CD4-positive, alpha-beta memory T cell (primary cell): ENCODE measurements at regions of chr7 and their contacts with region 1.

Region 1: DNA sequence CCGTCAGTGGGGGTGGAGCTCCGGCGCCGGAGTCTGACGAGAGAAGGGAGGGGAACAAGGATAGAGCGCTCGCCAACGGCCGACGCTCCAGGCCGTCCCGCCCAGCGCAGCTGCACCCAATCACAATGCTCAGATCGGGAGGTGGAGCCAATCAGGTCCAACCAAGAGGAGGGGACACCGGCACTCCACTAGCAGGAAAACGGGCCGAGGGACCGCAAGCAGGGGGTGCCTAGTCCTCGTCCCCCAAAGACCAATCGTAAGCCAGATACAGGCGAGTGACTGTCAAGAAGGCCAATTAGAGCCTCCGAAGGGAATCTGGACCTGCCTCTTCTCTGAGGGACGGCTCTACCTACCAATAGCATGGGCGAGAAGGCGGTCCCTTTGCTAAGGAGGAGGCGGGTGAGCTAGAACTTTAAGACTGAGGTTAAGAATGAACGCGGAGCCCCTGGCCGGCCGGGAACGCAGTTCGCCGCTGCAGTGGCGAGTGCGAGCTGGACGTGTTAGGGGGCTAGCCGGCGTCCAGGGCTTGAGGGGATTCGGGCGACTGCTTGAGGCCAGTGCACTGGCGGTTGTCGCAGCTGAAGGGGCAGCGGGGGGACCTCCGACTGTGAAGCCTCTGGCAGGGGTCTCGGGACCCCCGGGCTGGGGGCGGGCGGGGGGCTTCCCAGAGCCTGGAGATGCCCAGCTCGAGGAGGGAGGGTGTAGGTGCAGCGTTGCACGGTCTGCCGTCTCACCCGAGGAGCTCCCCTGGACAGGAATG is at the start of gene FBXO24:
- DNase-seq: peak; percentile 99 to 100 (median 100)
- H3K4me3 ChIP-seq: peak within 1 kb of the TSS; percentile 77 to 98
- H3K4me3 Mint-ChIP-seq: peak within 1 kb of the TSS; percentile 92 to 99 (median 97)
- H3K27ac ChIP-seq: peak within 1 kb of the TSS; percentile 79
- H3K27ac Mint-ChIP-seq: peak within 1 kb of the TSS; percentile 86 to 99 (median 97)
- H3K4me1 ChIP-seq: peaks cover 38% of the 10 kb centered on the region
- H3K4me1 Mint-ChIP-seq: peaks cover 11 to 27% (median 16%) of the 10 kb centered on the region in 4 donors
- H3K27me3 ChIP-seq: no peaks in the 10 kb centered on the region
- H3K27me3 Mint-ChIP-seq: peaks cover 0 to 2% of the 10 kb centered on the region in 2 donors
- total RNA-seq, gene FBXO24: 1.6 to 2.1 TPM

Region 2: GRCh38 chr7:100516135-100516812 is 70.2 kb before region 1 on chr7:
- CTCF ChIA-PET with region 1: interaction called, 4 read pairs
- POLR2A ChIA-PET with region 1: interaction called, 11 read pairs
- intact Hi-C with region 1: no loop called
- DNase-seq: peak; percentile 74 to 82 (median 80)
- H3K4me3 ChIP-seq: peak overlapping the region in 1 of 2 donors; percentile 33
- H3K4me3 Mint-ChIP-seq: peak overlapping the region; percentile 61 to 83 (median 78)
- H3K27ac ChIP-seq: peak overlapping the region; percentile 24
- H3K27ac Mint-ChIP-seq: peak overlapping the region; percentile 72 to 89 (median 82)
- H3K4me1 ChIP-seq: peaks cover 30% of the 10 kb centered on the region
- H3K4me1 Mint-ChIP-seq: peaks cover 21 to 47% (median 28%) of the 10 kb centered on the region in 4 donors
- H3K27me3 ChIP-seq: no peaks in the 10 kb centered on the region
- H3K27me3 Mint-ChIP-seq: no peaks in the 10 kb centered on the region

Region 3: DNA sequence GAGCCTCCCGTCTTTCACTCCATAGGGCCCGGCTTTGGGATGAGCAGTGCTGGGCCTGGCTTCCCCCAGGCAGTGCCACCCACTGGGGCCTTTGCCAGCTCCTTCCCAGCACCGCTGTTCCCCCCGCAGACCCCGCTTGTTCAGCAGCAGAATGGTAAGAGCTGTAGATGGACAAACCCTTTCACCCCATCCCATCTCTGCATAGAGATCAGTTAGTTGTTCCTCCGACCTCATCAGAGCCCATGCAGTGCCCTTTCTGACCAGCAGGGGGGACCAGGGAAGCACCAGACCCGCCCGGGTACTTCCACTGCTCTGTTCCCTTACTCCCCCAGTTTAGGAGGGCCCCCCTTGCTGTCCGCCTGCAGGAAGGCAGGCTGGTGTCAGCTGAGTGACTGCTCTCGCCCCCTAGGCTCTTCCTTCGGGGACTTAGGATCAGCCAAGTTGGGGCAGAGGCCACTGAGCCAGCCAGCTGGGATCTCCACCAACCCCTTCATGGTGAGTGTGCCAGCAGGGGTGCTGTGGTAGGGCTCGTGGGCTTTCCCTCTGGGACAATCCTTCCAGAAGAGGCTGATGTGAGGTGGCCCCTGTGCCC is 22.5 kb before region 1 on chr7:
- CTCF ChIA-PET with region 1: interaction called, 266 read pairs
- POLR2A ChIA-PET with region 1: interaction called, 307 read pairs
- intact Hi-C with region 1: loop called (anchors 1 kb)
- DNase-seq: peak; percentile 74 to 80 (median 77)
- H3K4me3 ChIP-seq: no peak overlapping the region
- H3K4me3 Mint-ChIP-seq: no peak overlapping the region
- H3K27ac ChIP-seq: peak overlapping the region; percentile 32
- H3K27ac Mint-ChIP-seq: peak overlapping the region; percentile 39 to 84 (median 59)
- H3K4me1 ChIP-seq: peaks cover 29% of the 10 kb centered on the region
- H3K4me1 Mint-ChIP-seq: peaks cover 16 to 40% (median 29%) of the 10 kb centered on the region in 4 donors
- H3K27me3 ChIP-seq: no peaks in the 10 kb centered on the region
- H3K27me3 Mint-ChIP-seq: no peaks in the 10 kb centered on the region

Region 4: DNA sequence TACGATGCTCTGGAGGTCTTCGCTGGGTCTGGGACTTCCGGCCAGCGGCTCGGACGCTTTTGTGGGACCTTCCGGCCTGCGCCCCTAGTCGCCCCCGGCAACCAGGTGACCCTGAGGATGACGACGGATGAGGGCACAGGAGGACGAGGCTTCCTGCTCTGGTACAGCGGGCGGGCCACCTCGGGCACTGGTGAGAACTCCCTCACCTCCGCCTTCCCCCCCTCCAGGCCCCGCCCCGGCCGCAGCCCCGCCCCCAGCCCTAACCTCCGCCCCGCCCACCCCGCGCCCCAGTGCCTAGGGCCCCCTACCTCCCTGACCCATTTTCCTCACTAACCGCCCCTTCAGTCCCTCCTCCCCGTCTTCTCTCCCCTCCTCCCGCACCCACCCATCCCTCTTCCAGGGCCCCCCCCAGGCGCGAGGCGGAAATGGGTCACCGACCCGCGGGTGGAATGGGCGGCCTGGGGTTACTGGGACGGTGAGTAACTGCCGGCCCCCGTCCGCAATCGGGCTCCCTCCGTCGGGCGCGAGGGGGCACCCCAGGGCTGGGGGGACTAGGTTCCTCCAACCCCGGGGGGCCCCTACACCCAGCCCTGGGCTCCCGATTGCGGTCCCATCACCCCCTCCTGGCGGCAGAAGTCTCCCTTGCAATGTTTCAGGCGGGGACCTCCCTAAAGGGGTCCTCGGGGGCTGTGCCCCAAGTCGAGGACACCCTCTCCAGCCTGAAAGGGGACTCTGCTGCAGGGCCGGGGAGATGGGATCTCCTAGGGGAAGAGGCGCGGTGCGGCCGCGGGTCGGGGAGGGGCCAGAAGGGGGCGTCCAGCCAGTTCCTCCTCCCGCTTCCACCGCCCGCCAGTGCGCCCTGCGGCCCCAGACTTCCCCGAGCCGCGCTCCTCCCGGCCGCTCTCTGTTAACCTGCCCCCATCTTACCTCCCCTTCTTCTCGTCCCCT is 17.9 kb after region 1 on chr7:
- CTCF ChIA-PET with region 1: interaction called, 9 read pairs
- POLR2A ChIA-PET with region 1: interaction called, 177 read pairs
- intact Hi-C with region 1: loop called (anchors 1 kb)
- DNase-seq: peak; percentile 63 to 83 (median 68)
- H3K4me3 ChIP-seq: peak overlapping the region; percentile 34 to 58
- H3K4me3 Mint-ChIP-seq: peak overlapping the region; percentile 78 to 93 (median 87)
- H3K27ac ChIP-seq: peak overlapping the region; percentile 64
- H3K27ac Mint-ChIP-seq: peak overlapping the region; percentile 71 to 95 (median 91)
- H3K4me1 ChIP-seq: peaks cover 21% of the 10 kb centered on the region
- H3K4me1 Mint-ChIP-seq: peaks cover 9 to 35% (median 16%) of the 10 kb centered on the region in 4 donors
- H3K27me3 ChIP-seq: no peaks in the 10 kb centered on the region
- H3K27me3 Mint-ChIP-seq: no peaks in the 10 kb centered on the region

Region 5: GRCh38 chr7:100632951-100633717 is 46.7 kb after region 1 on chr7:
- CTCF ChIA-PET with region 1: interaction called, 14 read pairs
- POLR2A ChIA-PET with region 1: interaction called, 44 read pairs
- intact Hi-C with region 1: no loop called
- DNase-seq: peak; percentile 45 to 66 (median 55)
- H3K4me3 ChIP-seq: peak overlapping the region; percentile 22 to 68
- H3K4me3 Mint-ChIP-seq: peak overlapping the region; percentile 76 to 89 (median 85)
- H3K27ac ChIP-seq: peak overlapping the region; percentile 58
- H3K27ac Mint-ChIP-seq: peak overlapping the region in 6 of 7 donors; percentile 42 to 91 (median 76)
- H3K4me1 ChIP-seq: peaks cover 8% of the 10 kb centered on the region
- H3K4me1 Mint-ChIP-seq: peaks cover 10 to 26% (median 18%) of the 10 kb centered on the region in 4 donors
- H3K27me3 ChIP-seq: no peaks in the 10 kb centered on the region
- H3K27me3 Mint-ChIP-seq: no peaks in the 10 kb centered on the region